SK-N-SH (cell line): ENCODE measurements at regions of chr2 and their contacts with region 1.

Region 1: DNA sequence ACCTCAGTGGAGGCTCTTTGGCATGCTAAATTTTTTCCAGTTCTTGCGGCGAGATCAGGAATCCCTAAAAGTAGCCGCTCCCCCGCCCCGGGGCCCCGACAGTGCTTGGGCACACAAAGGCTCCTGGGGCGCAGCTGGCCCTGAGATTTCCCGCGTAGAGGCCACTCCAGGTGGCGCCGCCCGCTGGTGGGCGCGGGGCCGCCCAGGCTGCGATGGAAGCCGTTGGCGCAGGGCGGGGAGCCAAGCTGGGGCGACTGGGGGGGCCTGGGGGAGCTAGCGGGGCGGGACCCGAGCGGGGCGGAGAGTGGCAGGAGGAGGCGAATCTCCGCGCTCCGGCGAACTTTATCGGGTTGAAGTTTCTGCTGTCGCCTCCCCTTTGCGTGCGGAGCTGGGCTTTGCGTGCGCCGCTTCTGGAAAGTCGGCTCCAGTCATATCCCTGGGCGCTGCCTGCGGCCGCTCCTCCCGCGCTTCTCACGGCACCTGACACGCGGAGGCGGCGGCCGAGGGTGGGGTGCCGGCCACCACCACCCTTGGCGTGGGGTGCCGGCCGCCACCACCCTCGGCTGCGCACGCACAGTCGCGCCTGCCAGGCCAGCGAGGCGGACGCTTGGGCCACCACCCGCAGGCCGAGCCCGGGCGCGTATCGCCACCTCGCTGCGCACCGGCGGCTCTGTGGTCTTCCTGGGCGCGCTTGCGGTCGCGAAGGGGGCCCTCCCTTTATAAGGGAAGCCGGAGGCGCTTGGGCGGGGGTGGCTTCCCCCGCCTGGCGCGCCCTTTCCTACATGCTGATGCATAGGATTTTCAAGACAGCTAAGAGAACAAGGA is 867 bp upstream of the CYP1B1 start:
- DNase-seq: peak; percentile 98
- H3K4me3 ChIP-seq: peak overlapping the region; percentile 68 to 70
- H3K27ac ChIP-seq: peak overlapping the region in 1 of 2 experiments; percentile 88; a peak in 2 of 4 replicates
- H3K4me1 ChIP-seq: peaks cover 0 to 13% of the 10 kb centered on the region in 2 experiments; a peak in 1 of 4 replicates
- H3K27me3 ChIP-seq: no peaks in the 10 kb centered on the region; the same call in 1 of the 2 replicates
- CTCF ChIP-seq: peak; percentile 66
- EP300 ChIP-seq: 0 out of 4 replicates have a peak, but pooled peaks of 1 of the 2 experiments have one; percentile 3
- RAD21 ChIP-seq: no peak

Region 2: DNA sequence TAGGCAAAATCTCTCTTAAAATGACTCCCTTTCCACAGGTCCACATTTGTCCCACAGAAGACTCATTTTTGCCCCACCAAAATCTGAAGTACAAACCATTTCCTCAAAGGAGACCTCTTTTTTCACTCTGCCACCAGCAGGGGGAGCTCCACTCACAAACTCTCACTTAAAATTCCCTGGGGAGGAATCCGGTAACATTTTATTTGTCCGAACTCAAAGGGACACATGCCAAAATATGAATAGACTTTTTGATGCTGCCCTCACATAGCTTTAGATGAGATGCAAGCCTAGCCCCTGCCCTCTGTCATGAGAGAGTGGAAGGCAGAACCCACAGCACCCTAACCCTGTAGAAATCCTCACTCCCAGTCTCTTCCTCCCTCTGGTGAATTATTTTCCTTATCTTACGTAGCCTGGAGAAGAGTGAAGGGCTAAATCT is 94.7 kb before region 1 on chr2:
- CTCF ChIA-PET with region 1: interaction called, 17 read pairs
- POLR2A ChIA-PET with region 1: no interaction called
- DNase-seq: peak; percentile 60
- H3K4me3 ChIP-seq: peak overlapping the region; percentile 2 to 25; a peak in 1 of 4 replicates
- H3K27ac ChIP-seq: 0 out of 4 replicates have a peak overlapping the region, but pooled peaks of 1 of the 2 experiments have one; percentile 2
- H3K4me1 ChIP-seq: peaks cover 0 to 3% of the 10 kb centered on the region in 2 experiments; a peak in 2 of 4 replicates
- H3K27me3 ChIP-seq: no peaks in the 10 kb centered on the region
- CTCF ChIP-seq: peak; percentile 99
- EP300 ChIP-seq: no peak
- RAD21 ChIP-seq: peak; percentile 78

Region 3: DNA sequence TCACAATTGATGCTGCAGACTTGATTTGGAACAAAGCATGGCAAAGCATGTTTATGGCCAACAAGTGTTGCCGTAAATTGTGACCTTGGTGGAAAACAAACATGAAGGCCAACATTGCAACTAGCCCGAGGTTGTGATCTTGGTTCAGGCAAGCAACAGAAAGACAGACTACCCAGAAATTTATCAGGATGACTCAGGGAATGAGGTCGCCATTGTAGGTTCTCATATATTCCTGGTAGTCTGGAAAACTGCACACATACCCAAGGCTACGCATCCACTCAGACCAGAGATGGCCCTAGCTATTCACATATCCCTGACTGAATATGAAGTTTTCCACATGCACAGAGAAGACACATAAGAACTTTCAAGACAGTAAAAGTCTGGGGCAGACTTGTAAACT is 31.0 kb before region 1 on chr2:
- CTCF ChIA-PET with region 1: interaction called, 13 read pairs
- POLR2A ChIA-PET with region 1: no interaction called
- DNase-seq: no peak
- H3K4me3 ChIP-seq: no peak overlapping the region
- H3K27ac ChIP-seq: no peak overlapping the region
- H3K4me1 ChIP-seq: no peaks in the 10 kb centered on the region
- H3K27me3 ChIP-seq: no peaks in the 10 kb centered on the region
- CTCF ChIP-seq: no peak
- EP300 ChIP-seq: no peak
- RAD21 ChIP-seq: no peak

Region 4: DNA sequence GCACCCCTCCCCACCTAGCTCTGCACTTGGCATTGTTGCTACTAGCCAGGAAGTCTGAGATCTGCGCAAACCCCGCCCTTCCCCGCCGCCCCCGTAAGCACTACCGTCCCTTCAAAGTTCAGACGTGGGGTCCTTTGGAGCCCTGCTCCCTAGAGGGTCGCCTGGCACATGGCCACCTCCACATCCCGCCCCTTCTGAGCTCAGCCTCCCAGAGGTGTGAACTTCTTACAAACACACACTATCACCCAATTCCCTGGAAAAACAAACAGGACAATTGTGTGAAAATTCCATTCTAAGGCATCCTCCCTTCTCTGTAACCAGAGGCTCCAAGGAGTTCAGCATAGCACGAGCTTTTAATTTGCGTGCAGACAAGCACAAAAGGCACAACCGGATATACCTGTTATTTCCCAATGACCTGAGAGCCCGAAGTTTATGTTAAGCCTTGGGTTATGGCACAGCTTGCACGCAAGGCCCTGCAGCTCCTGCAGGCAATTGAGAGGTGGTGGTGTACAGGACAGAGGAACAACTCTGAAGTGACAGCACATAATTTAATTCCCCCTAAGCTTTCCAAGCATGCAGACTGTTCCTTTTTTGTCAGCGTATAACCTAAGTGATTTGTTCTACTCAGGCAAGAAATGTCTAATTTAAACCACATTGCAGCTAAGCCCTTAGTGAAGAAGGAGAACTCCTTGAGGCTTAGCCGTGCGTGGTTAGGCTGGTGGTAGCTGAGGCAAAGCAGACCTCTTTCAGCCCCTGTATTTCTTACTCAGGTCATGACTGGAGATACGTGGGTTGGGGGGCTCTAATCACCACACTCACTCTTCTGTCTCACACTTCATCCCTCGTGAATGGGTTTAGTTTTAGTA is 19.4 kb after region 1 on chr2:
- CTCF ChIA-PET with region 1: interaction called, 36 read pairs
- POLR2A ChIA-PET with region 1: interaction called, 7 read pairs
- DNase-seq: no peak
- H3K4me3 ChIP-seq: no peak overlapping the region
- H3K27ac ChIP-seq: peak overlapping the region in 1 of 2 experiments; percentile 43; a peak in 2 of 4 replicates
- H3K4me1 ChIP-seq: peaks cover 0 to 44% of the 10 kb centered on the region in 2 experiments; a peak in 2 of 4 replicates
- H3K27me3 ChIP-seq: no peaks in the 10 kb centered on the region
- CTCF ChIP-seq: no peak
- EP300 ChIP-seq: no peak
- RAD21 ChIP-seq: no peak

Region 5: GRCh38 chr2:38122344-38122743 is 45.5 kb after region 1 on chr2:
- CTCF ChIA-PET with region 1: interaction called, 157 read pairs
- POLR2A ChIA-PET with region 1: interaction called, 4 read pairs
- DNase-seq: no peak
- H3K4me3 ChIP-seq: no peak overlapping the region
- H3K27ac ChIP-seq: no peak overlapping the region
- H3K4me1 ChIP-seq: peaks cover 0 to 14% of the 10 kb centered on the region in 2 experiments; a peak in 2 of 4 replicates
- H3K27me3 ChIP-seq: no peaks in the 10 kb centered on the region
- CTCF ChIP-seq: no peak
- EP300 ChIP-seq: no peak
- RAD21 ChIP-seq: no peak

Region 6: GRCh38 chr2:38264396-38265281 is 187.8 kb after region 1 on chr2:
- CTCF ChIA-PET with region 1: interaction called, 27 read pairs
- POLR2A ChIA-PET with region 1: interaction called, 8 read pairs
- DNase-seq: no peak
- H3K4me3 ChIP-seq: no peak overlapping the region
- H3K27ac ChIP-seq: no peak overlapping the region
- H3K4me1 ChIP-seq: peaks cover 0 to 2% of the 10 kb centered on the region in 2 experiments; a peak in 1 of 4 replicates
- H3K27me3 ChIP-seq: no peaks in the 10 kb centered on the region
- CTCF ChIP-seq: no peak
- EP300 ChIP-seq: no peak
- RAD21 ChIP-seq: no peak